Activated naive CD4-positive, alpha-beta T cell treated with anti-CD3 and anti-CD28 coated beads for 36 hours (primary cell): ENCODE measurements at regions of chr12 and their contacts with region 1.

Region 1: DNA sequence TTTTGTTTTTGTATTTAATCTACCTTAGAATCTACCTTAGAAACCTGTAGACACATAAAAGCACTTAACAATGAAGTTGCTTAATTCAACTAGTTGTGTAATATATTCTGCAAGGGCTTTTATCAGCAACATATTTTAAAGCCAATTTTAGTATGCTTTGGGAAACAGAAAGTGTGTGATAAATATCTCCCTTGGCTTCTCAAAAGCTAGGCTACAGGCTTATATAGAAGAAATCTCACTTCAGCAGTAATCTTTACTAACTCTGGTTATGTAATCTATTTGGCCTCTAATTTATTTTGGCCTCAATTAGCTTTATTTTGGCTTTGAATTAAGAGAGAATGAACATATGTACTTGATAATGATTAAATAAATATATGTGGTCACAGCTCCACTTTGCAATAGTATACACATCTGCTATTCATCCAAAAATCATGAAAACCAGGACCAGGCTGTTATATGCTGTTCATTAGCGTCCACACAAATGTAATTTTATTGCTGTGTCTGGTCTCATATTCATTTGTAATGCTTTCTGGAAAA is 37.2 kb downstream of the LRP6 start:
- DNase-seq: no peak
- H3K4me3 Mint-ChIP-seq: no peak overlapping the region
- H3K27ac Mint-ChIP-seq: no peak overlapping the region
- H3K4me1 Mint-ChIP-seq: peaks cover 1% of the 10 kb centered on the region
- H3K27me3 Mint-ChIP-seq: no peaks in the 10 kb centered on the region

Region 2: DNA sequence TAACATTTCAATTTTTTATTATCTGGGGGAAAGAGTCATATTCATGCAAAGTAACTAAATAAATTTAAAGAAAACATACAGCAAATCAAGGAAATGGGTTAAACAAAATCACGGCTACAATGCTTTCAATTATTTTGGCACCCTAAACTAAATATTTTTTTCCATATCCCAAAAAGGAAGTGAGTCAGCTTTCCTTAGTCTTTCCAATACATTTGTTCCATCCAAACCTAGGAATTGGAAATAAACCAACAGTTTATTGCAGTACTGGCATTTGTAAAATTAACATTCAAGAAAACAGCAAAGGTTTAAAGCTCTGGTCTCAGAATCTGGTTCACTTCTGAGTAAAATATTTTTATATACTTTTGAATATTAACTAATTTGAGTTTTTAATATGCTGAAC is 69.6 kb before region 1 on chr12:
- CTCF ChIA-PET with region 1: interaction called, 10 read pairs
- intact Hi-C with region 1: no loop called
- DNase-seq: no peak
- H3K4me3 Mint-ChIP-seq: no peak overlapping the region
- H3K27ac Mint-ChIP-seq: no peak overlapping the region
- H3K4me1 Mint-ChIP-seq: no peaks in the 10 kb centered on the region
- H3K27me3 Mint-ChIP-seq: no peaks in the 10 kb centered on the region